Cardiac septum (tissue), 1 donor: ENCODE measurements at regions of chr22 and their contacts with region 1.

Region 1: GRCh38 chr22:38700789-38701628 is at the start of gene JOSD1:
- DNase-seq: peak; percentile 99
- total RNA-seq, gene JOSD1: 24.0 TPM

Region 2: DNA sequence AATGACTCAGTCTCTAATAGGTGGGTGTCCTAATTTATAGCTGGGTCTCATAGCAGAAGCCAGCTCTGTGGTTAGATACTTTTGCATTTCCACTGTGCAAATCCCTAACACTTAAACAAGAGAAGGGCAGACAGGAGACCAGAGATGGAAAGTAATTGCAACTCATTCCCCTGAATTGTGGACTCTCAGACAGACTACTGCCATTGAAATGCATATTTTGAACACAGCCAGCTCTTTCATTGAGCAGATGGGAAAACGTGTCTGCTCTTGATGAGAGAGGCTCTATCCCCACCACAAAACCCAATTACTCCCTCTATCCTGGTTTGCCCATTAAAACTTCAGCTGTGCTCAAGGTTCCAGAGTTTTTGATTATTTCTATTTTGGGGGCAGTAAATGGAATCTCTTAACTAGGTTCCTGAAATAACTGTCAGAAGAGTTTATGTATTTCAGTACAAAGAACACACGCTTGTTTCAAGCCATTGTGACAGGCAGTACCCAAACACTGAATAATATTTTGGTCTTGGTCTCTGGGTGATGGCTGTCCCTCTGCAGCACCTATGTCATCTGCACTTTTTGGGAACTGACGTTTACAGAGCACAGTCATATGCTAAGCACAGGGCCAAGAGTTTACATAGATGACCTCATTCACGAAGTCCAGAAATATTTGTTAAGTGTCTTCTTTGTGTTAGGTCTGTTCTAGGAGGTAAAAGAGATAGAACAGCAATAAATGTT is 86.5 kb before region 1 on chr22:
- intact Hi-C with region 1: no loop called
- DNase-seq: no peak

Region 3: GRCh38 chr22:38755911-38756532 is 55.0 kb after region 1 on chr22 and contains the start of gene SUN2:
- intact Hi-C with region 1: loop called (anchors 5 kb)
- DNase-seq: peak; percentile 98
- total RNA-seq, gene SUN2: 130 TPM